Sigmoid colon (tissue), 7 donors: ENCODE measurements at regions of chr17 and their contacts with region 1.

Region 1: DNA sequence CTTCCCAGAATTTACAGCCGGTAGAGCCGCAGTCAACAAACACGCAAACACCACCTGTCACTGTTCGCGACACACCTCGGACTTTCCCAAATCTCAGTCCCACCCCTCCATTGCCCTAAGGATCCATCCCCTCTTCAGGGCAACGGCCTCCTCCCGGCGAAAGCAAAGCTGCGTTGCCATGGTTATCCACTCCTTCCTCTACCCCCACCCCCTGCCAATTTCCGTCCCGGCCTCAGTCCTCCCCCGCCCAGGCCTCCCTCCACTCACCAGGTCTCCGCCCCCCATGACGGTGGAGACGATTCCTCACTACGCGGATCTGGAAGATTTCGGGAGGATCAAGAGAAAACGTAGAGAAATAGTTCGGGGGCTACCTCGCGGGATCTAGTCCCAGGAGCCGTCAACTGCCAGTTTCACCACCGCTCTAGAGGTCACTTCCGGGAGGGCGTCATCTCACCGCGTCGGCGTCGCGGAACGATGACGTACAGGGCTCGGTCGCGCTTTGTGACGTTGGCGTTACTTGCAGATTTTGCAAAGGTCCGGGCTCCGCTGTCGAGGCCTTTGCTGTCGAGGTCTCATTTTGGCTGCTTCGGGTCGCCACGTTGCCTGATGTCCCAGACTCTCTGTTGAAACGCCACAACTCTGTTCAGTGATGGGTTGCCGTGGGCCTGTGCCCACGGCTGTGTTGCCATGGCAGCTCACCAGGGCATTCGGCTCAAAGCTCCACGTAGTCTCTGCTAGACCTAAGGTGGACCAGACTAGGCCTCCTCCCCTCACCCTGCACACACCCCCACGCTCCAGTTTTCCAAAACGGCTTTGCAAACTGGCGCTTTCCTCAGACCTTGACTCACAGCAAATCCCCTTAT is at the start of gene CWC25:
- DNase-seq: peak; percentile 97
- H3K4me3 ChIP-seq: peak within 1 kb of the TSS; percentile 73 to 86 (median 84)
- H3K27ac ChIP-seq: peak within 1 kb of the TSS; percentile 94 to 99 (median 96)
- H3K4me1 ChIP-seq: peaks cover 0 to 33% (median 25%) of the 10 kb centered on the region in 4 donors
- H3K27me3 ChIP-seq: no peaks in the 10 kb centered on the region
- CTCF ChIP-seq: no peak
- EP300 ChIP-seq: peak in 2 of 4 donors; percentile 81 to 87
- POLR2A ChIP-seq: peak; percentile 84 to 88
- total RNA-seq, gene CWC25: 15.6 to 32.4 (median 17.3) TPM

Region 2: DNA sequence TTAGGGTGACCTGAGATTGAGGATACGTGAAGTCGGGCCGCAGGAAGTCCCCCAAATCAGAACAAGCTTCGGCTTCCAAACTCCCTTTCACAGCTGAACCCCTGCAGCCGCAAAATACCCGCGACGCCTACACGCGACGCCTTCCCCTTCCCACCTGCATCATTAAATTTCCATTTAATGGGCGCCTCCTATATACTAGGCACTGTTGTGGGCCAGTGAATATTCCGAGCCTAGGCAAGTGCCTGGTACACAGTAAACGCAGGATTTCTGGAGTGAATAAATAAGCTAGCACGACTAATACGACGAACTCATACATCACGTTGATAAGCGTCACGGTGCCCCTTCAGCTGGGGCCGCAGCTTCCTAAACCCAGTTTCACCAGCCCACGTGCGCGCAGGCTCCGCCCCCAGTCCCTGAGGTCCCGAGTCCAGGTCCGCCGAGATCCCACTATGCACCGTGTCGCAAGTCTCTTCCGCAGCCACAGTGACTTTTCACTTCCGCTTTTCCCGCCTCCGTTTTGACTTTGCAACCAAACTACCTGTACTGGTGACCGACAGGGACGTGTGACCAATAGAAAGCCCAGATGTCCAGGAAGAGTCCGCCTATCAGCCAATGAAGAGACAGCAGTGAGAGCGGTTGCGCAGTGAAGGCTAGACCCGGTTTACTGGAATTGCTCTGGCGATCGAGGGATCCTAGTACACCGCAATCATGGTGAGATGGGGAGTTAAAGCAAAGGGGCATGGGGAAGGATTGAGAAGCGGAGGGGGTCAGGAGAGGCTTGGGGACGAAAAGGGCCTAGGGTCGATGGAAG is 72.8 kb before region 1 on chr17 and contains the start of gene PSMB3:
- intact Hi-C with region 1: loop called (anchors 1 kb)
- DNase-seq: peak; percentile 99
- H3K4me3 ChIP-seq: peak within 1 kb of the TSS; percentile 78 to 92 (median 86)
- H3K27ac ChIP-seq: peak within 1 kb of the TSS; percentile 86 to 94 (median 89)
- H3K4me1 ChIP-seq: peaks cover 0 to 57% (median 55%) of the 10 kb centered on the region in 4 donors
- H3K27me3 ChIP-seq: peaks cover 0 to 24% (median 0%) of the 10 kb centered on the region in 3 donors
- CTCF ChIP-seq: no peak
- EP300 ChIP-seq: no peak
- POLR2A ChIP-seq: peak in 1 of 2 donors; percentile 21
- total RNA-seq, gene PSMB3: 135 to 198 (median 153) TPM

Region 3: DNA sequence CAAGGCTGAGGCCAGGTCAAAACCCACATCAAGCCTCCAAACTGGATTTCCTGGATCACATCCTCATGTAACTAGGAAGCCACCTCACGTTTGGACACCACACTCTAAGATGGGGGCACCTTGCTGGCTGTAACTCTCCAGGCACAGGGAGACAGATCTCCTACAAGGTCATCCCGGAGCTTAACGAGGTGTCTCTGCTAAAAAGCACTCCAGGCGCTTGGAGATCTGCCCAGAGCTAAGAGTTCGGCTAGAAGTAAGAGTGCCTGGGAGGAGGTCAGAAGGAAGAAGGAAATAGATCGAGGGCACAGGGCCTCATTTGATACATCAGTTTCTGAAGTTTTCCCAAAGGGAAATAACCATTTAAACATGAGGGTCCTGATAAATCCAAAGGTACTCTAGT is 56.7 kb before region 1 on chr17:
- intact Hi-C with region 1: no loop called
- DNase-seq: no peak
- H3K4me3 ChIP-seq: no peak overlapping the region
- H3K27ac ChIP-seq: peak overlapping the region in 1 of 4 donors; percentile 49
- H3K4me1 ChIP-seq: peaks cover 0 to 10% (median 0%) of the 10 kb centered on the region in 4 donors
- H3K27me3 ChIP-seq: no peaks in the 10 kb centered on the region
- CTCF ChIP-seq: no peak
- EP300 ChIP-seq: no peak
- POLR2A ChIP-seq: no peak

Region 4: DNA sequence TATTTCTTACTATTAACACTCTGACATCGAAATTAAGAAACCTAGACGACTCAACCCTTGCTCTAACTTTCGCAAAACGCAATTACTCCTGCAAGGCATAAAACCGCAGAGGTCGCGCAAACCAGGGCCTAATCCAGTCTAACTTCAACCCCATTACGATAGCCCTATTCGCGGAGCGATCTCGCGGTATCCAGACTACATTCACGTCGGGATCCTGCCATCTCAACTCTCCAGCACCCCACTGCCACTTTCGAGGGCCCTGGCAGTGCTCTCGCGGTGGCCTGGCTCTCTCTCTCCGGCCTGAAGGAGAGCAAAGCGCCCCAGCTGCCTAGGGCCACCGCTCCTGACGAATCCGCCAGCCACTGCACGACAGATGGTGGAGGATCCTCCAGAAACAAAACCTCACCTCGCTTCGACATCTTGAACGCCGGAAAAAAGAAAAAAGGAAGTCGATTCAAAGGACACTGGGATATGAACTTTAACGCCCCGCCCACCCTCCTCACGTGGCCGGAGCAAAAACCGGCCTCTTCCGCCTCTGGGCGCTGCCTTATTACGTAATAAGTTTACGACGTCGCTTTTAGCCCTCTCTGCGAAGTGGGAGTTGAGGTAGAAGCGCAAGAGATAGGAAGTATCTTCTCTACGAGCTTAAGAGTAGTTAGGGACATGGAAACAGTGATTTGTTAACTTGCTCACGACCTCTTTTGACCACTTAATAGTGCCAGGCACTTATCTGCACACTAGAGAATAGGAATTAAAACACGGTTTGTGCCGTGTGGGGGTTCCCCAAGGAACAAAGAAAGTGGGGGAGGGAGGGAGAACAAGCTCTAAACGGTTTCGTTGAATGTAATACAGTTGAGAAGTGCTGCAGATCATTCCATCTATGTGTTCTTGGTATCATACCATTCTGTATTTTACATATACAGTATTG is 28.4 kb after region 1 on chr17 and contains the start of gene RPL23:
- intact Hi-C with region 1: loop called (anchors 1 kb)
- DNase-seq: peak; percentile 98
- H3K4me3 ChIP-seq: peak within 1 kb of the TSS; percentile 42 to 60 (median 56)
- H3K27ac ChIP-seq: peak within 1 kb of the TSS; percentile 88 to 93 (median 91)
- H3K4me1 ChIP-seq: peaks cover 0 to 30% (median 30%) of the 10 kb centered on the region in 4 donors
- H3K27me3 ChIP-seq: no peaks in the 10 kb centered on the region
- CTCF ChIP-seq: no peak
- EP300 ChIP-seq: peak in 2 of 4 donors; percentile 57 to 65
- POLR2A ChIP-seq: peak; percentile 89 to 94
- total RNA-seq, gene RPL23: 1,692 to 2,841 (median 2,464) TPM

Region 5: DNA sequence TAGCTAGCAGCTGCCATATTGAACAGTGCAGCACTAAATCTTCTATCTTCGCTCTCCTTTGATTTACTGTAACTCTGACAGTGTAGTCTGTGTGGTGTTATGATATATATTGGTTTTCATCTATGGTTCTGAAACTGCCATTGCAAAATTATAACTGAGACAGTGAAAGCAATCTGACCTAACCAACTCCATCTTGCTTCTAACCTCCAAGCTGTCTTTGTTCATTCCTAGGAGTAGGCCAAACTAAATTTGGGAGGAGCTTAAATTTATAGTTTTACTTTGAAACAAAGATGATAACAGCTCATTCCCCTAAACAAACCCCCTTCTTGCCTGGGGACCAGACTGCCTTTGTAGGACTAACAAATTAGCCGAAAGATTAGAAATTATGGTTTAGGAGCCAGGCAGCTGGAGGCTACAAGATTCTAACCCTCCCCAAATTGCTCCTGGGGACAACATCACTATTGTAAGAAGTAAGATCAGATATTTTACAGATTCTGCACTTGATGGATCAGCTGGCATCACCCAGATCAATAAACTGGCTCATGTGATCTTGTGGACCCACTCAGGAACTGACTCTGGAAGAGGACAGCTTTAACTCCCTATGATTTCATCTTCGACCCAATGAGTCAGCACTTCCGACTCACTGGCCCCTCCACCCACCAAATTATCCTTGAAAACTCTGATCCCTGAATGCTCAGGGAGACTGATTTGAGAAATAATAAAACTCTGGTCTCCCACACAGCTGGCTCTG is 189.1 kb after region 1 on chr17:
- intact Hi-C with region 1: no loop called
- DNase-seq: no peak
- H3K4me3 ChIP-seq: no peak overlapping the region
- H3K27ac ChIP-seq: peak overlapping the region in 1 of 4 donors; percentile 48
- H3K4me1 ChIP-seq: peaks cover 0 to 6% (median 2%) of the 10 kb centered on the region in 4 donors
- H3K27me3 ChIP-seq: no peaks in the 10 kb centered on the region
- CTCF ChIP-seq: no peak
- EP300 ChIP-seq: no peak
- POLR2A ChIP-seq: no peak